HepG2 (cell line): ENCODE measurements at regions of chr17 and their contacts with region 1.

Region 1: DNA sequence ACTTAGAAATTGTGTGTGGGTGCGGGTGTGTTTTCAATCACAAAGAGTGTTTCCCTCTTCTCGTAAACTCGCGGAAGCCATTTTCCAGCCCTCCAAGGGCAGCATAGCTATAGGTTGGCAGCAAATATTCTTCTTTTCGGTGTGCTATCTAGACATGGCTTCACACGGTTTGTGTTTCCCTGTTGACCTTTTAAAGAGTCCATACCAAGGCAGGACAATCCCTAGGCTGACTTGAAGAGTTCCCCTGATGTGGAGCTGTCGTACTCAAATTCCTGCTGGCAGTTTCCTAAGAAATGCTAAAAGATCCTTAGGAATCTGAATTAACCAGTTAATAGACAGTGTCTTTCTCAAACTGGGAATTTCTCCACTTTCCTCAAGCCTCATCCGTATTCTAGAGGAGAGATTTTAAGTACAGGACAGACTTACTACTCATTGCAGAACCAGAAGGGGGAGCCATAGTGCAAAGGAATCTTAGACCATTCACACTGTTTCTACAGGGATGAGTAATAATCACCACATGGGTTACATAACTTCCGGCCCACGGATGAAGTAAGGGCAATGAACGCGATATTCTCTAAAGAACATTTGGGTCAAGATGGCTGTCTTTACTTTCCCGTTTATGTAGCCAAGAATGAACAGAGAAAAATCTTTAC is 288.6 kb upstream of the ELAC2 start:
- DNase-seq: peak; percentile 69
- ATAC-seq: peak; percentile 71
- H3K4me3 ChIP-seq: no peak overlapping the region
- H3K27ac ChIP-seq: no peak overlapping the region
- H3K4me1 ChIP-seq: peaks cover 12% of the 10 kb centered on the region
- H3K27me3 ChIP-seq: no peaks in the 10 kb centered on the region
- CTCF ChIP-seq: peak; percentile 76
- EP300 ChIP-seq: no peak
- POLR2A ChIP-seq: no peak
- RAD21 ChIP-seq: no peak

Region 2: DNA sequence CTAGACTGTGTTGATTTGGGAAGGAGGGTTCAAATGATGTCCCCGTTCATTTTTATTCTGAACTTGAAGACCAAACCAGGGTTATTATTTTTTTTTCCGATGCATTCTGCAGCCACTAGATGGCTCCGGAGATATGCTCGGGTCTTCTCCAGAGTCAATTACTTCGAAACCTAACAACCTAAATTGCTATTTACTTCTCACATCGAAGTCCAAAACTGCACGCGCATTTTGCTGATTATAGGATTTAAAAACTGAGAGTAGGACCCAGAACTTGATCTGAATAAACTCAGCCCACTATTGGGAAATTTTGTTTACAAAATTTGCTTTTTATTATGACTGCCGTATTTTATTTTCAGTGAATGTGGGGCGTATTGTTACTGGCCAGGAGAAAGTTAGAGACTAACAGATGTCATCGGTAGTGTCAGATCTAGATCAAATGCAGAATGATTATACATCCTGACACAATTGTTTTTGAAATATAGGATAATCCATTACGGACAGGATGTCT is 31.5 kb after region 1 on chr17:
- CTCF ChIA-PET with region 1: no interaction called
- POLR2A ChIA-PET with region 1: no interaction called
- in situ Hi-C with region 1: no loop called
- intact Hi-C with region 1: loop called (anchors 1 kb)
- DNase-seq: peak; percentile 42
- ATAC-seq: no peak
- H3K4me3 ChIP-seq: peak overlapping the region in 2 of 3 experiments; percentile 5 to 9; a peak in 1 of 6 replicates
- H3K27ac ChIP-seq: no peak overlapping the region
- H3K4me1 ChIP-seq: peaks cover 10% of the 10 kb centered on the region
- H3K27me3 ChIP-seq: no peaks in the 10 kb centered on the region
- CTCF ChIP-seq: peak; percentile 79
- EP300 ChIP-seq: no peak
- POLR2A ChIP-seq: no peak
- RAD21 ChIP-seq: peak; percentile 64; the same call in 1 of the 2 replicates